Gastrocnemius medialis (tissue), 4 donors: ENCODE measurements at regions of chr14 and their contacts with region 1.

Region 1: GRCh38 chr14:90399541-90400444 is 3.0 kb downstream of the CALM1 start:
- DNase-seq: peak; percentile 92 to 96
- ATAC-seq: peak; percentile 80 to 81
- H3K4me3 ChIP-seq: peak overlapping the region; percentile 82 to 100 (median 98)
- H3K27ac ChIP-seq: peak overlapping the region; percentile 91 to 94 (median 94)
- H3K4me1 ChIP-seq: peaks cover 49 to 64% of the 10 kb centered on the region in 2 donors
- H3K27me3 ChIP-seq: no peaks in the 10 kb centered on the region
- CTCF ChIP-seq: peak; percentile 95 to 100 (median 97)
- POLR2A ChIP-seq: peak in 1 of 2 donors; percentile 14

Region 2: DNA sequence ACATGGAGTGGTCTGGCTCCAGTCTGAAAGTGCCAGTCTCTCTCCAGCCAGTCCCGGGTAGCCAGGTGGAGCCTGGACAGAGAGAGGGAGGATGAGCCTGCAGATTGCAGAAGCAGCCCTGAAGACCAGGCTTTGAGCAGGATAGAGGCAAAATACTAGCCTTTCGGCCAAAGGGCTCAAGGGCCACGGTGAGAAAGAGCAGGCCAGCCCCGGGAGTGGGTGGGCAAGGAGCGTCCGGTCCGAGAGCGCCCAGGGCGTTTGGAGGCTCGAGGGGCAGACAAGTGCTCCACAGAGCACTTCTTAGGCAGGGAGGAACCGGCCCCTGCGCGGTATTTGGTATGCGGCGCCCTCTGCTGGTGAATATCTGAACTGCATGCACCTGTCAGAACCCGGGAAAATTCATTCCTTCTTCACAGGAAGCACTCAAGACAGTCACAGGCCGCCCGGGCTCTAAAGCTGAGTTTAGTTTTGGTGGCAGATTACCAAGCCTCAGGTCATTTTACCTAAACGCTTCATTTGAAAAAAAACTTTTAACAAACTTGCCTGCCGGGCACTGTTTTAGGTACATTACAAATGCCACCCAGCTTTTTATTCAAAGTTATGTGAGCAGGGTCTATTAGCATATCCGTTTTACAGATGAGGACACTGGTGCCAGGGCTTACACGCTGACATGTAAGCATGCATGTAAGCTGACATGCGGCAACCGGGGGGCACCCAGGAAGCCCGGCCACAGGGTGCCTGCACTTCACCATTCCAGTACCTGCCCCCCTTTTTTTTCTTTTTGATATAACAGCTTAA is 164.4 kb before region 1 on chr14:
- in situ Hi-C with region 1: no loop called
- intact Hi-C with region 1: no loop called
- DNase-seq: peak in 1 of 2 donors; percentile 9
- ATAC-seq: no peak
- H3K4me3 ChIP-seq: no peak overlapping the region
- H3K27ac ChIP-seq: no peak overlapping the region
- H3K4me1 ChIP-seq: no peaks in the 10 kb centered on the region
- H3K27me3 ChIP-seq: peaks cover 4 to 16% (median 7%) of the 10 kb centered on the region in 3 donors
- CTCF ChIP-seq: peak; percentile 40 to 70 (median 66)
- POLR2A ChIP-seq: no peak

Region 3: GRCh38 chr14:90301668-90302090 is 98.1 kb before region 1 on chr14:
- in situ Hi-C with region 1: loop called in 1 of 4 experiments (anchors 5 kb)
- intact Hi-C with region 1: loop called (anchors 2 kb)
- DNase-seq: no peak
- ATAC-seq: peak; percentile 77 to 78
- H3K4me3 ChIP-seq: no peak overlapping the region
- H3K27ac ChIP-seq: peak overlapping the region; percentile 74 to 88 (median 82)
- H3K4me1 ChIP-seq: peaks cover 27 to 32% of the 10 kb centered on the region in 2 donors
- H3K27me3 ChIP-seq: no peaks in the 10 kb centered on the region
- CTCF ChIP-seq: peak in 4 of 5 experiments; percentile 36 to 66 (median 45)
- POLR2A ChIP-seq: no peak

Region 4: DNA sequence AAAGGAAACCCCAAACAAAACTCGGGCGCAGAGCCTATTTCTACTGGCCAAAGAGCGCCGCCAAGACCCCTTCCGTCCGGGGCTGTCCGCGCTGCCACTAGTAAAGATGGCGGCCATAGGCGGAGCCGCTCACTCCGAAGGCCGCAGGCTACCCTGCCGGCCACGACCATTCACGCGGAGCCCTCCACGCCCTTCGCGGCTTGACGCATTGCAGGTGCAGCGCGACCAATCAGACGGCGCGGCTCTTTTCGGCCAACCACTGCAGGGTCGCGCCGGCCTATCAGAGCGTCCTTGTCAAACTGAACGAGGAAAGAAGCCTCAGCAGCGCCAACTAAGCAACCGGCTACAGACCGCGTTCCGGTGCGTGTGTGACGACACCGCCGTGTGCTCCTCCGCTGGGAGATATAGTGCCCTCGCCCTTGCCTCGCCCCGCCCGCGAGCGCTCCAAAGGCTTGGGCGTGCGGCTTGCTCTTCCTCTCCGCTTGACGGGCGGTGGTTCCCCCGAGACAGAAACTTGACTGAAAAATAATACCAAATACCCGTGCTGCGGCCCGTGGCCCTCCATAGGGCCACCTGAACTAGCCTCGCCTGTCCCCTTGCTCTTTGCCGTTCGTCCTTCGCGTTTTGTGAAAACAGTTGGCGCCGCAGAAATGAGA is 16.6 kb before region 1 on chr14:
- in situ Hi-C with region 1: no loop called
- intact Hi-C with region 1: loop called (anchors 1 kb)
- DNase-seq: peak; percentile 99 to 100
- ATAC-seq: peak; percentile 77 to 81
- H3K4me3 ChIP-seq: peak overlapping the region; percentile 69 to 80 (median 78)
- H3K27ac ChIP-seq: peak overlapping the region; percentile 97 to 99 (median 98)
- H3K4me1 ChIP-seq: peaks cover 29 to 40% of the 10 kb centered on the region in 2 donors
- H3K27me3 ChIP-seq: no peaks in the 10 kb centered on the region
- CTCF ChIP-seq: peak in 2 of 5 experiments; percentile 27 to 39
- POLR2A ChIP-seq: peak; percentile 94 to 98

Region 5: GRCh38 chr14:90624223-90624622 is 224.4 kb after region 1 on chr14:
- in situ Hi-C with region 1: no loop called
- intact Hi-C with region 1: loop called (anchors 2 kb)
- DNase-seq: peak; percentile 94 to 97
- ATAC-seq: peak; percentile 58 to 64
- H3K4me3 ChIP-seq: peak overlapping the region in 2 of 4 donors; percentile 9 to 28
- H3K27ac ChIP-seq: peak overlapping the region; percentile 89 to 96 (median 94)
- H3K4me1 ChIP-seq: peaks cover 51 to 68% of the 10 kb centered on the region in 2 donors
- H3K27me3 ChIP-seq: no peaks in the 10 kb centered on the region
- CTCF ChIP-seq: no peak
- POLR2A ChIP-seq: peak; percentile 47 to 48

Region 6: GRCh38 chr14:90726656-90727055 is 326.9 kb after region 1 on chr14:
- in situ Hi-C with region 1: no loop called
- intact Hi-C with region 1: loop called (anchors 1 kb)
- DNase-seq: peak; percentile 78 to 79
- ATAC-seq: peak; percentile 88
- H3K4me3 ChIP-seq: no peak overlapping the region
- H3K27ac ChIP-seq: peak overlapping the region; percentile 62 to 81 (median 78)
- H3K4me1 ChIP-seq: peaks cover 16 to 19% of the 10 kb centered on the region in 2 donors
- H3K27me3 ChIP-seq: no peaks in the 10 kb centered on the region
- CTCF ChIP-seq: peak in 4 of 5 experiments; percentile 25 to 49 (median 32)
- POLR2A ChIP-seq: peak in 1 of 2 donors; percentile 29

Region 7: GRCh38 chr14:91177073-91178034 is 777.6 kb after region 1 on chr14:
- in situ Hi-C with region 1: loop called in 2 of 4 experiments (anchors 25 kb)
- intact Hi-C with region 1: no loop called
- DNase-seq: no peak
- ATAC-seq: no peak
- H3K4me3 ChIP-seq: no peak overlapping the region
- H3K27ac ChIP-seq: peak overlapping the region in 3 of 4 donors; percentile 5 to 40 (median 27)
- H3K4me1 ChIP-seq: peaks cover 4 to 8% of the 10 kb centered on the region in 2 donors
- H3K27me3 ChIP-seq: no peaks in the 10 kb centered on the region
- CTCF ChIP-seq: peak; percentile 23 to 72 (median 60)
- POLR2A ChIP-seq: no peak